Adrenal gland (tissue), 19 donors: ENCODE measurements at regions of chr17 and their contacts with region 1.

Region 1: GRCh38 chr17:50547035-50547735 is at the start of gene SPATA20:
- DNase-seq: peak; percentile 91 to 97 (median 95)
- H3K4me3 ChIP-seq: peak within 1 kb of the TSS in 3 of 4 donors; percentile 23 to 82 (median 52)
- H3K27ac ChIP-seq: peak within 1 kb of the TSS; percentile 22 to 83 (median 63)
- H3K4me1 ChIP-seq: peaks cover 23 to 24% of the 10 kb centered on the region in 2 donors
- H3K27me3 ChIP-seq: no peaks in the 10 kb centered on the region
- CTCF ChIP-seq: peak; percentile 96 to 100 (median 98)
- POLR2A ChIP-seq: peak; percentile 82 to 87
- total RNA-seq, gene SPATA20: 52.1 to 205 (median 151) TPM

Region 2: DNA sequence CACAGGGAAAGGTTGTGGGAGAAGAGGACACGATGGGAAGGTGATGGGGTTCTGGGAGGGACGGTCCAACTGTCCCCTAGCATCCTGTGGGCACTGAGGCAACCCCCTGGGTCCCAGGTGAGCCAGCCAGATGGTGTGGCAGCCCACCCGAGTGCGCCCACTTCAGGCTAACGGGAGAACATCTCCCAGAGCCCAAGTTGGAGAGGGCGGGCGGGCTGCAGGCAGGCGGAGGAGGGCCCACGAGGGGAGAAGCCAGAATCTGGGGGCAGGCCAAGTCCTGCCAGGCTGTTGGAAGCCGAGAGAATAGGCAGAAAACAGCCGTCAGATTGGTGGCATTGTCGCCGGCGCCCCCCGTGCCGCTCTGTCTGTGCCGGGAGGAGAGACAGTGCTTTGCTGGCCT is 73.7 kb after region 1 on chr17:
- intact Hi-C with region 1: loop called (anchors 5 kb)
- DNase-seq: no peak
- H3K4me3 ChIP-seq: no peak overlapping the region
- H3K27ac ChIP-seq: no peak overlapping the region
- H3K4me1 ChIP-seq: peaks cover 0 to 12% of the 10 kb centered on the region in 2 donors
- H3K27me3 ChIP-seq: no peaks in the 10 kb centered on the region
- CTCF ChIP-seq: no peak
- POLR2A ChIP-seq: no peak

Region 3: DNA sequence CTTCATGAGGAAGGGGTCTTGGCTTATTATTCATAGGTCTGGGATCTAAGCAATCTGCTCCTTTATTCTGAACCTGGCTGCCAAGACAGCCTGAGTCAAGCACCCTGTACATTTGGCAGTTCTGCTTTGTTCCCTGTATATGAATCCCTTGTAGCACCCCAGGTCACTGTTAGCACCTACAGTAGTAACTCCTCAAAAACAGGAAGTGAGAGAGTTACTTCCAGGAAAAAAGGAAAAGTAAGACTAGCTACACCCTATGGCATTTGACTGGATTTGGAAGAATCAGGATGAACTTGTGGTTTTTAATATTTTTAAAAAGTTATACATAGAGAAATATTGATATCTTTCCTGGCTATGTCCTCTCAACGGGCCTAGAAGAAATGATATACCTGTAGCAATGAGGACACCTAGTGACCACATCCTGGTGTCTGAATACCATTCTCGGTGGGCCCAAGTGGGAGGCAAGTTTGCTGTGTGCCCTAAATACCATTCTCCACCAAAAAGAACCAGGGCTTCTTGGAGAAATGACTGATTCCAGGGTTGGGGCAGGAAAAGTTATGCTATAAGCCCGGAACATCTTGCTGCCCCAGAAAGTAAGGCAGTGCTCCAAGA is 150.6 kb after region 1 on chr17:
- intact Hi-C with region 1: loop called (anchors 5 kb)
- DNase-seq: peak in 1 of 7 donors; percentile 35
- H3K4me3 ChIP-seq: no peak overlapping the region
- H3K27ac ChIP-seq: no peak overlapping the region
- H3K4me1 ChIP-seq: peaks cover 0 to 30% of the 10 kb centered on the region in 2 donors
- H3K27me3 ChIP-seq: no peaks in the 10 kb centered on the region
- CTCF ChIP-seq: no peak
- POLR2A ChIP-seq: no peak

Region 4: DNA sequence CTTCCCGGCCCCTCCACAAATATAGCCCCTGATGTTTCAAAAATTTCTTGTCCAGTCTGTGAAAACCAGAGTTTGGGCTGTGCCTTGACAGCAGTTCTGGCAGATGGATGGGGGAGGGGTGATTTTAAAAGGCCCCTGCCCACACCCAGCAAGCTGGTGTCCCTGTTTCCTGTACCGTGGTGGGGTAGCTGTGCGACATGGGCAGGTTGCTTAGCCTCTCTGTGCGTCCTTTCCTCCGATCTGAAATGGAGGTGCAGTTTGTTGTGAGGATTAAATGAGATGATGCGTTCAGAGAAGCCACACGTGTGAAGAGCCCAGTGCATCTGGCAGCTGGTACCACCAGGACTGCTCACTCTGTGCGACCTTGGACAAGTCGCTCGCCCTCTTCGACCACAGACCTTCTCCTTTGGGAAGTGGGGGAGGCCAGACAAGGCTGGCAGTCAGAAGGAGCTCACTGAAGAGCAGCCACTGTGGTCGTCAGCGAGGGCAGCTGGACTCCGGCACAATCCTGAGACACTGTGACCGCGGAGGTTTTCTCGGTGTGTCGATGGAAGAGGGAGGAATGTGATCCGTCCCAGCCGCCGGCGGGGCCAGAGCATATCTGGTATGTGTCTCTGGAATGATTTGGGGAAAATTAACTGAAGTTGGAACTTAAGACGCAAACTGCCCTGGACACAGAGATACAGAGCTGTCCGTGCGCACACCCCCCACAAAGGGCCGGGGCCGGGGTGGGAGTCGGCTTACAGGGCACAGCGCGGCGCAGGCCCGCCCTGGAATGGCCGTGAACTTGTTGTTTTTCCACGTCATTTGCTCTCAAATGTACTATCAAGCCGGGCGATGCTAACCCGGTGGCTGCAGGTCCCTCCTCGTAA is 287.5 kb after region 1 on chr17:
- intact Hi-C with region 1: loop called (anchors 5 to 10 kb)
- DNase-seq: peak in 5 of 7 donors; percentile 36 to 71 (median 57)
- H3K4me3 ChIP-seq: peak overlapping the region in 2 of 4 donors; percentile 3 to 39
- H3K27ac ChIP-seq: peak overlapping the region in 1 of 5 donors; percentile 18
- H3K4me1 ChIP-seq: no peaks in the 10 kb centered on the region
- H3K27me3 ChIP-seq: no peaks in the 10 kb centered on the region
- CTCF ChIP-seq: no peak
- POLR2A ChIP-seq: no peak